Activated CD4-positive, alpha-beta memory T cell treated with anti-CD3 and anti-CD28 coated beads, Interleukin-2, amount 10 ng/mL, durations not matched to agents 7 days and 5 days (primary cell): ENCODE measurements at regions of chr5 and their contacts with region 1.

Region 1: DNA sequence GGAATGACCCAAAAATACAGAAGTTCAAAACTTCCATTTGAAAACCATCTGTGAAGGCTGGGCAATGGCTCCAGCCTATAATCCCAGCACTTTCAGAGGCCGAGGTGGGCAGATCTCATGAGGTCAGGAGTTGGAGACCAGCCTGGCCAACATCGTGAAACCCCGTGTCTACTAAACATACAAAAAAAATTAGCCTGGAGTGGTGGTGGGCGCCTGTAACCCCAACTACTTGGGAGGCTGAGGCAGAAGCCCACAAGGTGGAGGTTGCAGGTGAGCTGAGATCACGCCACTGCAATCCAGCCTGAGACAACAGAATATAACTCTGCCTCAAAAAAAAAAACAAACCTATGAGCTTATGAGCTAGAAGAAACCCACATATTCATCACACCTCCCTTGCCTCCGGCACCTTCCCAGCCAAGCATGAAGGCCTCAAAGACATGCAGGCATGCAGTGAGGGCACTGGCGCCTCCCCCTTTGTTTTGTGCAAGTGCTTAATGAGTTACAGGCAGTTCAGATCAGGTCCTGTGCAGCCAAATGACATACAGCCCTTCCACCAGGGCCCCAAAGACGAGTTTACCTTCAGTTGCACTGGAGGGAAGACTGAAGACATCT is 9.9 kb downstream of the HNRNPH1 start:
- DNase-seq: no peak
- H3K4me3 Mint-ChIP-seq: no peak overlapping the region
- H3K27ac Mint-ChIP-seq: peak overlapping the region; percentile 18
- H3K4me1 Mint-ChIP-seq: peaks cover 75% of the 10 kb centered on the region
- H3K27me3 Mint-ChIP-seq: no peaks in the 10 kb centered on the region

Region 2: GRCh38 chr5:179475208-179475751 is 138.3 kb before region 1 on chr5:
- CTCF ChIA-PET with region 1: no interaction called
- POLR2A ChIA-PET with region 1: no interaction called
- DNase-seq: no peak
- H3K4me3 Mint-ChIP-seq: no peak overlapping the region
- H3K27ac Mint-ChIP-seq: no peak overlapping the region
- H3K4me1 Mint-ChIP-seq: no peaks in the 10 kb centered on the region
- H3K27me3 Mint-ChIP-seq: no peaks in the 10 kb centered on the region

Region 3: GRCh38 chr5:179550511-179551230 is 62.9 kb before region 1 on chr5 and contains the start of gene RUFY1:
- CTCF ChIA-PET with region 1: no interaction called
- POLR2A ChIA-PET with region 1: interaction called, 12 read pairs
- DNase-seq: peak; percentile 83
- H3K4me3 Mint-ChIP-seq: peak within 1 kb of the TSS; percentile 91
- H3K27ac Mint-ChIP-seq: peak within 1 kb of the TSS; percentile 92
- H3K4me1 Mint-ChIP-seq: peaks cover 29% of the 10 kb centered on the region
- H3K27me3 Mint-ChIP-seq: no peaks in the 10 kb centered on the region
- total RNA-seq, gene RUFY1: 36.1 to 39.1 TPM